H1 (cell line): ENCODE measurements at regions of chr1 and their contacts with region 1.

Region 1: GRCh38 chr1:154442006-154442740 is 37.0 kb downstream of the IL6R start:
- DNase-seq: peak in 1 of 2 experiments; percentile 72
- H3K4me3 ChIP-seq: no peak overlapping the region
- H3K27ac ChIP-seq: no peak overlapping the region
- H3K4me1 ChIP-seq: peaks cover 0 to 4% (median 0%) of the 10 kb centered on the region in 4 experiments; a peak in 2 of 7 replicates
- H3K27me3 ChIP-seq: no peaks in the 10 kb centered on the region; a peak in 1 of 7 replicates
- CTCF ChIP-seq: peak; percentile 65 to 78 (median 71)
- EP300 ChIP-seq: no peak
- POLR2A ChIP-seq: no peak
- RAD21 ChIP-seq: peak; percentile 36 to 59

Region 2: GRCh38 chr1:154431586-154432373 is 10.4 kb before region 1 on chr1:
- CTCF ChIA-PET with region 1: interaction called, 27 read pairs
- POLR2A ChIA-PET with region 1: interaction called, 3 read pairs
- DNase-seq: no peak
- H3K4me3 ChIP-seq: no peak overlapping the region
- H3K27ac ChIP-seq: no peak overlapping the region
- H3K4me1 ChIP-seq: peaks cover 8 to 20% (median 16%) of the 10 kb centered on the region in 4 experiments
- H3K27me3 ChIP-seq: peaks cover 0 to 2% (median 0%) of the 10 kb centered on the region in 4 experiments; a peak in 1 of 7 replicates
- CTCF ChIP-seq: no peak
- EP300 ChIP-seq: no peak
- POLR2A ChIP-seq: no peak
- RAD21 ChIP-seq: no peak

Region 3: DNA sequence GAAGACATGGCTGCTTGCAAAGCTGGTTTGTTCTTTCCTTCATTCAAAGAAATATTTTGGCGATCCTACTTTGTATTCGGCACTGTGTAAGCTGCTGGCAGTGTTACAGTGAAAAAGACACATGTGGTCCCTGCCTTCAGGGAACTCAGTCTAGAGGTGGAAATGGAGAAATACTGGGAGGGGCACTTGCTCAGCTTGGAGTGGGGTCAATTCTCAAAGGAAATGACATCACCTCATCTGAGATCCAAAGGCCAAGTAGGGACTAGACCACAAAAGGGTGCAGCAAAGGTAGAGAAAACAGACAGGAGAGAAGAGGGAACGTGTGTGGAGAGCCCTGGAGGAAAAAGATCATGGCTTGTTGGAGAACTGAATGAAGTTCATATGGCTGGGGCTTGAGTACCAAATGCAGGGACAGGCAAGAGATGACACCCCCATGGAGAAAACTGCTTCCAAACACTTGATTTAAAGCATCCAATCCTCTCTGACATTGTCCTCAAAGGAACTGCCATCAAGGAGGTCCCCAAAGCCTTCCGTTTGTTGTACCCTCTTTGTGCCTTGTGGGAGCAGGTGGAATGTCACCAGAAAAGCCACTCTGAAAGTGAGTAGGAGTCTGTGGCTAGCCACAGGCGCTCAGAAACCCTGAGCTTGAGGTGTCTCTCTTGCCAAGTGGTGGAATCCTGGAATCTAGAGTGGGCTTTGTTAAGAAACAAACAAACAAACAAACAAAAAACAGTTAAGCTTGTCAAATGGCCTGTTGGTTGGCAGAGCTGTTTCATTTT is 11.6 kb after region 1 on chr1:
- CTCF ChIA-PET with region 1: interaction called, 10 read pairs
- POLR2A ChIA-PET with region 1: interaction called, 3 read pairs
- DNase-seq: no peak
- H3K4me3 ChIP-seq: no peak overlapping the region
- H3K27ac ChIP-seq: no peak overlapping the region
- H3K4me1 ChIP-seq: no peaks in the 10 kb centered on the region
- H3K27me3 ChIP-seq: peaks cover 0 to 1% (median 0%) of the 10 kb centered on the region in 4 experiments; a peak in 1 of 7 replicates
- CTCF ChIP-seq: no peak
- EP300 ChIP-seq: no peak
- POLR2A ChIP-seq: no peak
- RAD21 ChIP-seq: no peak

Region 4: DNA sequence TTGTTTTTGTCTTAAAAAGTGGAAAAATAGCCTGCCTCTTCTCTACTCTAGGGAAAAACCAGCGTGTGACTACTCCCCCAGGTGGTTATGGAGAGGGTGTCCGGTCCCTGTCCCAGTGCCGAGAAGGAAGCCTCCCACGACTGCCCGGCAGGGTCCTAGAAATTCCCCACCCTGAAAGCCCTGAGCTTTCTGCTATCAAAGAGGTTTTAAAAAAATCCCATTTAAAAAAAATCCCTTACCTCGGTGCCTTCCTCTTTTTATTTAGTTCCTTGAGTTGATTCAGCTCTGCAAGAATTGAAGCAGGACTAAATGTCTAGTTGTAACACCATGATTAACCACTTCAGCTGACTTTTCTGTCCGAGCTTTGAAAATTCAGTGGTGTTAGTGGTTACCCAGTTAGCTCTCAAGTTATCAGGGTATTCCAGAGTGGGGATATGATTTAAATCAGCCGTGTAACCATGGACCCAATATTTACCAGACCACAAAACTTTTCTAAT is 24.8 kb after region 1 on chr1:
- CTCF ChIA-PET with region 1: interaction called, 13 read pairs
- POLR2A ChIA-PET with region 1: no interaction called
- DNase-seq: no peak
- H3K4me3 ChIP-seq: no peak overlapping the region
- H3K27ac ChIP-seq: no peak overlapping the region
- H3K4me1 ChIP-seq: peaks cover 0 to 4% (median 2%) of the 10 kb centered on the region in 4 experiments; a peak in 4 of 7 replicates
- H3K27me3 ChIP-seq: no peaks in the 10 kb centered on the region
- CTCF ChIP-seq: peak; percentile 16 to 31 (median 24)
- EP300 ChIP-seq: no peak
- POLR2A ChIP-seq: no peak
- RAD21 ChIP-seq: peak; percentile 17 to 44; a peak in 3 of 4 replicates